Activated CD4-positive, alpha-beta memory T cell treated with anti-CD3 and anti-CD28 coated beads for 36 hours (primary cell): ENCODE measurements at regions of chr21 and their contacts with region 1.

Region 1: DNA sequence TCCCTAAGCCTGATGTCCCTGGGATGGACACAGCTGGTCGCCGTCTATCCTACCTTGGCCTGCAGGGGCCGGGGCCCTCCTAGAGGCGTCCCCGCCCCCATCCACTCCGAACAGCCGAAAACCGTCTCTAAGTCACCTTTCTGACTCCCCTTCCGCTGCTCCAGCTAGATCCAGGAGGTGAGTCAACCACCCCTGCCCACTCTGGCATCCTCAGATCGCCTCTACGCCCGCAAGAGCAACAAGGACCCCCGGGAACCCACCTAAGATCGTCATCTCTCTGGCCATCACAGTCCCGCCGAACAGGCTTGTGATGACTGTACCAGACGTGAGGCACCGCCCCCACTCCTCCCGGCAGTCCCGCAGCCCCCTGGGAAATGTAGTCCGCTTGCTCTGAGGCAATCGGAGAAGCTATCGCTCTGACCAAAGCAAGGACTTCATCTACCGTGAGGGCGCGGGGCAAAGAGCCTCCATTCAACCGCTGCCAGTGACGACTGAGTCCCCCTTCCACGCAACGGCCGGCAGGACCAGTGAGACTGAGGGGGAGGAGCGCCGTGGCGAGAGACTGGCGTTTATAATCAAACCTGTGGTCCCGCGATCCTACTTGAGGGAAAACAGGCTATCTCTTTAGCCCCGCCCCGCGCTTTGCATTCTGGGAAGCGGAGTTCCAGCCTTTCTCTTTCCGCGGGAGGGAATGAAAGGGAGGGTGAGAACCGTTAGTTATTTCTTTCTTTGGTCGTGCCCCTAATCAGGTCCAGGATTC is at the start of gene HSPA13:
- DNase-seq: peak; percentile 100
- H3K4me3 Mint-ChIP-seq: peak within 1 kb of the TSS; percentile 95
- H3K27ac Mint-ChIP-seq: peak within 1 kb of the TSS; percentile 95
- H3K4me1 Mint-ChIP-seq: peaks cover 27% of the 10 kb centered on the region
- H3K27me3 Mint-ChIP-seq: no peaks in the 10 kb centered on the region
- total RNA-seq, gene HSPA13: 48.5 to 49.1 TPM

Region 2: DNA sequence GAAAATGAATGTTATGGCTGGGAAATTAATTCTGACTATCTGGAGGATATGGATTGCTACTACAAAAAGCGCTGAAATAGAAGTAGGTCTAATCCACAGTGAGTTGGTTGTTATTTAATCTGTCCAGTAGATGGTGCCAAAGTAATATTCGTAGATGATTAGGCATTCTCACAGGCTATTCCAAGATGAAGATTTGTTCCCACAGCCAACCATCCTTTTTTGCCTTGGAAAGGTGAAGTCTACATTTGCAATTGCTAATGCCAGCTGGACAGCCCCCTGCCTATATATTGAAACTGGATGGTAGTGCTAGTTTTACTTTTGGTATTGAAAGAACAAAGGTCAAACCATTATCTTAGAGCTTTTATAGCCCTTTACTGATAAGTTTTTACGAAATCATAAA is 123.3 kb before region 1 on chr21:
- CTCF ChIA-PET with region 1: interaction called, 8 read pairs
- POLR2A ChIA-PET with region 1: no interaction called
- intact Hi-C with region 1: loop called (anchors 5 kb)
- DNase-seq: no peak
- H3K4me3 Mint-ChIP-seq: no peak overlapping the region
- H3K27ac Mint-ChIP-seq: no peak overlapping the region
- H3K4me1 Mint-ChIP-seq: no peaks in the 10 kb centered on the region
- H3K27me3 Mint-ChIP-seq: peaks cover 1% of the 10 kb centered on the region

Region 3: GRCh38 chr21:14533504-14534428 is 150.8 kb after region 1 on chr21:
- CTCF ChIA-PET with region 1: no interaction called
- POLR2A ChIA-PET with region 1: interaction called, 4 read pairs
- intact Hi-C with region 1: loop called (anchors 1 kb)
- DNase-seq: peak; percentile 29
- H3K4me3 Mint-ChIP-seq: peak overlapping the region; percentile 95
- H3K27ac Mint-ChIP-seq: peak overlapping the region; percentile 100
- H3K4me1 Mint-ChIP-seq: peaks cover 82% of the 10 kb centered on the region
- H3K27me3 Mint-ChIP-seq: peaks cover 2% of the 10 kb centered on the region

Region 4: DNA sequence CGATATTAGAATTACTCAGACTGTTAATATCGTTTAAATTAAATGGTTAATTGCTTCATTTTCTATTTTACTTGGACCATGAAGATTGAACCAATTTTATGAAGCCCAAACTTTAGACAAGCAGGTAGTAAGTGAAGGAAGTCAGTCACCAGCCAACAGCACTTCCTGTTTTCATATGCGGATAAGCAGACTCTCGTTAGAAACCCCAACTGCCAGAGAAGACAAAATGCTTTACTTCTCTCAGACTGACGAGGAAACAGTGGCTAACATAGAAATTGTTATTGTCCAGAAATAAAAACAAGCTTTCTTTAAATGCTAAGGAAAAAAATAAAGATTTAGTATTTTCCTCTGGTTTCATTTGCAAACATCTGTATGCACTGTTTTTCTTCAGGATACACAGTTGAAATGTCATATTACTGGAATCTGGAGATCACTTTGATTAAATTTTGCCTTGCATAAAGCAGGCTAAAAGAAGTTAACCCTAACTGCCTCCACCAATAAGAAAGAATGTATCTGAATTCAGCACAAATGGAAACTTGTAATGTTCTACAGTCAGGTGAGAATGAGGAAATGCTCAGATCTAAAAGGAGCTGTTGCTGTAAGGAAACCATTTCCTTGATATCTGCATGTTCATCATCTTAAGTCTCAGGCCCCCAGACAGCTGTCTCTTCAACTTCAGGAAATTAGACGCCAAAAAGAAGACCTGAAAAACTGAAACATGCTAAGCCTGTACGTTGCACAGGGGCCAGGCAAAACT is 292.9 kb after region 1 on chr21:
- CTCF ChIA-PET with region 1: no interaction called
- POLR2A ChIA-PET with region 1: no interaction called
- intact Hi-C with region 1: loop called (anchors 2 kb)
- DNase-seq: no peak
- H3K4me3 Mint-ChIP-seq: peak overlapping the region; percentile 64
- H3K27ac Mint-ChIP-seq: peak overlapping the region; percentile 94
- H3K4me1 Mint-ChIP-seq: peaks cover 32% of the 10 kb centered on the region
- H3K27me3 Mint-ChIP-seq: no peaks in the 10 kb centered on the region

Region 5: GRCh38 chr21:15437883-15438282 is 1054.9 kb after region 1 on chr21:
- CTCF ChIA-PET with region 1: no interaction called
- POLR2A ChIA-PET with region 1: no interaction called
- intact Hi-C with region 1: loop called (anchors 5 kb)
- DNase-seq: no peak
- H3K4me3 Mint-ChIP-seq: no peak overlapping the region
- H3K27ac Mint-ChIP-seq: no peak overlapping the region
- H3K4me1 Mint-ChIP-seq: peaks cover 13% of the 10 kb centered on the region
- H3K27me3 Mint-ChIP-seq: no peaks in the 10 kb centered on the region